Heart right ventricle (tissue), 16 donors: ENCODE measurements at regions of chr6 and their contacts with region 1.

Region 1: DNA sequence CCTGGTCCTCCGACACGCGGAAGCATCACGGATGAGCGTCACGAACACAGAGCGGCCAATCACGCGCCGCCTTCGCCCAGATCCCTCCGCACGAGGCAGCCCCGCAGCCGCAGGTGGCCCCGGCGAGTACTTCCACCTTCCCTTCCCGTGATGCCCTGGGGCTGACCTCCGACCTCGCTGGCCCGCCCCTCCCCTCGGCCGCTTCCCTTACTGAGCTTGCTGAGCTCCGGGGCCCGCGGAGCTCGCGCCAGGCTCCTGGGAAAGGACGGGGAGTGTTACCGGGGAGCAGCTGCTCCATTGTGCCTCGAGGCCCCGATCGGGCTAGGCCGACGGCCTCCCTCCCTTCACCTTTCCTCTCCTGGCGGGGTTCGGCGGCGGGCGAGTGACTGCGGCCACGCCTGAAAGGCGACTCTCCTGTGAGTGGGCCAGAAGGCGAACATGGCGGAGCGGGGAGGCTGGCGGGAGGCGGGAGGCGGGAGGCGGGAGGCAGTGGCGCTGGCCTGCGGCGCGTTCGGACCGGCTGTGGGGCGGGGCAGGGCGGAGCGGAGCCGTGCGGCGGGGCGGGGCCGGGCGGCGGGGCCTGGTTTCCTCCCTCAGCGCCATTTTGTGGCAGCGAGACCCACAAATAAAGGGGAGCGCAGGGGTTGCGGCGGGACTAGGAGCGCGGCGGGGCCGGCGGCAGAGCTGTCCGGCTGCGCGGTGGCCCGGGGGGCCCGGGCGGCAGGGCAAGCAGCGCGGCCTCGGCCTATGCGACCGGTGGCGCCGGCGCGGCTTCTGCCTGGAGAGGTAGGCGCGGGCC is at the start of gene WTAP:
- DNase-seq: peak; percentile 94 to 95
- ATAC-seq: peak; percentile 96 to 98 (median 97)
- H3K4me3 ChIP-seq: peak within 1 kb of the TSS; percentile 64 to 96 (median 86)
- H3K27ac ChIP-seq: peak within 1 kb of the TSS; percentile 92 to 100 (median 99)
- H3K4me1 ChIP-seq: peaks cover 0 to 57% (median 51%) of the 10 kb centered on the region in 9 donors
- H3K27me3 ChIP-seq: no peaks in the 10 kb centered on the region
- CTCF ChIP-seq: no peak
- total RNA-seq, gene WTAP: 44.4 to 70.1 (median 47.2) TPM

Region 2: DNA sequence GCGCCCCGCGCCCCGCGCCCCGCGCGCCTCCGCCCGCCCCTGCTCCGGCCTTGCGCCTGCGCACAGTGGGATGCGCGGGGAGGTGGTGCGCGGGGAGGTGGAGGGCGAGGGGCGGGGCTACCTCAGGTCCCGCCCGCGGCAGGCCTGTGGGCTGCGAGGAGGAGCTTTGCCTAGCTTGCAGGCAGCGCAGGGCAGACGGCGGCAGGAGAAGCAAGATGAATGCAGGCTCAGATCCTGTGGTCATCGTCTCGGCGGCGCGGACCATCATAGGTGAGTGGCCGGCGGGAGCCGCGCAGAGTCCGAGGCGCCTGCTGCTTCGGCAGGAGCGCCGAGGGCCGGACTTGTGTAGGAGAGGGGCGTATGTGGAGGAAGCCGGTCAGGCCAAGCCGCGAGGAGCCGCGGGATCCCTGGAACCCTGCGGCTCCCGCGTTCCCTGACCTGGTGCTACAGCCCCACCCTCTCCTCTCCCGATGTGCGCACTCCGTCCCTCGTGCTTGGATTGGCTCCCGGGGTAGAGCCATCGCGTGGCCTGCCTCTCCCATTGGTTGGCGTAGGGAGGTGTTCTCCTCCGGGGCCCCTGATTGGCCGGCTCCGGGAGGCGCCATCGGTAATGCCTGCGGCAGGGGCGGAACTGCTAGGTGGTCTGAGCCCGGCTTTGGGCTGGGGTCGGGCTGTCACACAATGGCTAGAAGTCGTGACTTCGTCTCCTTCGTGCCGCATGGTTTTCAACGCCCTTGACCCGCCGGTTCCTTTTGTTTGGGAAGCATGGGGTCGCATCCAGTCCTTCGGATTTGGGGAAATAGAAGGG is 35.0 kb after region 1 on chr6 and contains the start of gene ACAT2:
- intact Hi-C with region 1: loop called in 4 of 10 experiments (anchors 5 kb)
- DNase-seq: peak; percentile 94 to 97
- ATAC-seq: peak; percentile 98 to 100 (median 99)
- H3K4me3 ChIP-seq: peak within 1 kb of the TSS; percentile 82 to 100 (median 97)
- H3K27ac ChIP-seq: peak within 1 kb of the TSS; percentile 87 to 99 (median 97)
- H3K4me1 ChIP-seq: peaks cover 3 to 30% (median 19%) of the 10 kb centered on the region in 9 donors
- H3K27me3 ChIP-seq: no peaks in the 10 kb centered on the region
- CTCF ChIP-seq: peak in 3 of 9 donors; percentile 9 to 10 (median 10)
- total RNA-seq, gene ACAT2: 3.4 to 7.5 (median 5.8) TPM

Region 3: GRCh38 chr6:159969921-159970320 is 242.8 kb after region 1 on chr6:
- intact Hi-C with region 1: loop called in 1 of 10 experiments (anchors 10 kb)
- DNase-seq: peak in 1 of 2 donors; percentile 74
- ATAC-seq: peak in 7 of 8 donors; percentile 52 to 79 (median 68)
- H3K4me3 ChIP-seq: peak overlapping the region; percentile 84 to 99 (median 97)
- H3K27ac ChIP-seq: peak overlapping the region; percentile 26 to 98 (median 94)
- H3K4me1 ChIP-seq: peaks cover 15 to 81% (median 49%) of the 10 kb centered on the region in 9 donors
- H3K27me3 ChIP-seq: no peaks in the 10 kb centered on the region
- CTCF ChIP-seq: no peak

Region 4: GRCh38 chr6:159989492-159990480 is 262.7 kb after region 1 on chr6:
- intact Hi-C with region 1: no loop called
- DNase-seq: no peak
- ATAC-seq: no peak
- H3K4me3 ChIP-seq: no peak overlapping the region
- H3K27ac ChIP-seq: peak overlapping the region in 2 of 10 donors; percentile 11 to 48
- H3K4me1 ChIP-seq: peaks cover 6 to 82% (median 43%) of the 10 kb centered on the region in 9 donors
- H3K27me3 ChIP-seq: no peaks in the 10 kb centered on the region
- CTCF ChIP-seq: no peak